Esophagus muscularis mucosa (tissue), 4 donors: ENCODE measurements at regions of chrX and their contacts with region 1.

Region 1: DNA sequence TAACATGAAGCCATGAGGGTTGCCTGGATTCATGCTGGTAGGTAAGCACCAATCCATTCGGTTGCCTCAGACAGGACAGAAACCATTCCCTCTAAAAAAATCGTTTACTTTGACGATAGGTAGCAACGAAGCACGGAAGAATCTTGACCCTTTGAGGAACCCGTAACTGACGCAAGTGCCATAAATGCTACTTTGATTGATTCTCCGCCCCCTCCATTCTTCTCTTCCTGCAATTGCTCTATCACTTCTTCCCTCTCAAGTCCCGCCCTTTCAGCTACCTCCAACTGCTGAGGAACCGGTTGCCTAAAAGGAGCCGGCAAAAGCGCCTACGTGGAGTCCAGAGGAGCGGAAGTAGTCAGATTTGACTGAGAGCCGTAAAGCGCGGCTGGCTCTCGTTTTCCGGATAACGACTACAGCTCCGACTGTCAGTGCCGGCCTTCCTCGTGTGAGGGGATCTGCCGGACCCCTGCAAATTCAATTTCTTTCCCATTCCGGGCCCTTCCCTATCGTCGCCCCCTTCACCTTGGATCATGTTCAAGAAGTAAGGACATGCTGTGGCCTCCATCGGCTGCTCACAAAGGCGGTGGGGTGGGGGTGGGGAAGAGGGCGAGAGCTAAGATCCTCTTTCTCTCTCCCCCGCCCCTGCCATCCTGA is at the start of gene MCTS1:
- DNase-seq: peak; percentile 92
- H3K4me3 ChIP-seq: peak within 1 kb of the TSS; percentile 60 to 67 (median 62)
- H3K27ac ChIP-seq: peak within 1 kb of the TSS; percentile 80 to 89 (median 86)
- H3K4me1 ChIP-seq: peaks cover 0 to 11% (median 7%) of the 10 kb centered on the region in 4 donors
- H3K27me3 ChIP-seq: no peaks in the 10 kb centered on the region
- CTCF ChIP-seq: no peak
- EP300 ChIP-seq: no peak
- POLR2A ChIP-seq: peak; percentile 17
- total RNA-seq, gene MCTS1: 11.6 to 17.5 (median 15.0) TPM

Region 2: DNA sequence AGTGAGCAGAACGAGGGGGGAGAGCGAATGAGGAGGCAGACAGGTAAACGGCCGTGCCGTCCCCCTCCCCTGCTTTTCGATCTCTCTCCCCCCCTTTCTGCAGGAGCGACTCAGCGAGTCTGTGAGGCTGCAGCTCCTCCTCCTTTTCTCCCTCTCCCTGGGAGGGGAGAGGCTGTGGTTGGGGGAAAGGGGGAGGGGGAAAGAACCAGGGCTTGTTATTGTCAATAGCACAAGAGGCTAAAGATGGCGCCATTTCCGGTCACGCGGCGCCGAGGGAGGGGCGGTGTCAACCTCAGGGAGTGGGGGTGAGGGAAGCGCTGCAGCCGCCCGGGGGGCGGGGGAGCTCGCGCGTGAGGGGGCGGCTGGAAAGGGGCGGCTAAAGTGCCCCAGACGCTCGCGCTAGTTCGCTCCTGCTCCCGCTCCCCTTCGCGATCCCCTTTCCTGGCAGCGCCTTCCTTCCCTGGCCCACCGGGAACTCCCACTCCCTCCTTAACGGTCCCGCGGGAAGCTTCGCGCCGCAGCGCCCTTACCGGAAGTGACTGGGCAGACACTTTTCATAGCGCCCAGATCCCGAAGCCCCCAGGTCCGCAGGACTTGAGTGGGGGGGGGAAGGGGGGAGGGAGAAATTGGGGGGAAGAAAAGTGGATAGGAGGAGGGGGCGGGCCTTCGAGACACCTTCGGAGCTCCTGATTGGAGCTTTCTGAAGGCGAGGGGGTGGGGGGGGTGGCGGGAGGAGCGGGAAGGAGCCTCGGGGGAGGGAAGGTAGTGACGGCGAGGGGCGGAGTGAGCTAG is 42.8 kb before region 1 on chrX and contains the start of gene CUL4B:
- intact Hi-C with region 1: loop called (anchors 2 kb)
- DNase-seq: peak; percentile 97
- H3K4me3 ChIP-seq: peak within 1 kb of the TSS; percentile 61 to 77 (median 70)
- H3K27ac ChIP-seq: peak within 1 kb of the TSS; percentile 95 to 97 (median 96)
- H3K4me1 ChIP-seq: peaks cover 6 to 28% (median 23%) of the 10 kb centered on the region in 4 donors
- H3K27me3 ChIP-seq: no peaks in the 10 kb centered on the region
- CTCF ChIP-seq: no peak
- EP300 ChIP-seq: no peak
- POLR2A ChIP-seq: no peak
- total RNA-seq, gene CUL4B: 31.5 to 45.7 (median 39.6) TPM